HAP-1 (cell line): ENCODE measurements at regions of chr6 and their contacts with region 1.

Region 1: GRCh38 chr6:137717074-137718073 is 149.7 kb upstream of the TNFAIP3 start:
- DNase-seq: no peak
- H3K4me3 ChIP-seq: no peak overlapping the region
- H3K4me1 ChIP-seq: no peaks in the 10 kb centered on the region; the same call in 1 of the 2 replicates
- H3K27me3 ChIP-seq: no peaks in the 10 kb centered on the region

Region 2: GRCh38 chr6:137056121-137056880 is 661.1 kb before region 1 on chr6:
- in situ Hi-C with region 1: no loop called
- DNase-seq: peak; percentile 58 to 95
- H3K4me3 ChIP-seq: no peak overlapping the region
- H3K4me1 ChIP-seq: peaks cover 18% of the 10 kb centered on the region
- H3K27me3 ChIP-seq: no peaks in the 10 kb centered on the region

Region 3: GRCh38 chr6:137475103-137475502 is 242.3 kb before region 1 on chr6:
- in situ Hi-C with region 1: no loop called
- DNase-seq: no peak
- H3K4me3 ChIP-seq: no peak overlapping the region
- H3K4me1 ChIP-seq: peaks cover 20% of the 10 kb centered on the region
- H3K27me3 ChIP-seq: no peaks in the 10 kb centered on the region

Region 4: DNA sequence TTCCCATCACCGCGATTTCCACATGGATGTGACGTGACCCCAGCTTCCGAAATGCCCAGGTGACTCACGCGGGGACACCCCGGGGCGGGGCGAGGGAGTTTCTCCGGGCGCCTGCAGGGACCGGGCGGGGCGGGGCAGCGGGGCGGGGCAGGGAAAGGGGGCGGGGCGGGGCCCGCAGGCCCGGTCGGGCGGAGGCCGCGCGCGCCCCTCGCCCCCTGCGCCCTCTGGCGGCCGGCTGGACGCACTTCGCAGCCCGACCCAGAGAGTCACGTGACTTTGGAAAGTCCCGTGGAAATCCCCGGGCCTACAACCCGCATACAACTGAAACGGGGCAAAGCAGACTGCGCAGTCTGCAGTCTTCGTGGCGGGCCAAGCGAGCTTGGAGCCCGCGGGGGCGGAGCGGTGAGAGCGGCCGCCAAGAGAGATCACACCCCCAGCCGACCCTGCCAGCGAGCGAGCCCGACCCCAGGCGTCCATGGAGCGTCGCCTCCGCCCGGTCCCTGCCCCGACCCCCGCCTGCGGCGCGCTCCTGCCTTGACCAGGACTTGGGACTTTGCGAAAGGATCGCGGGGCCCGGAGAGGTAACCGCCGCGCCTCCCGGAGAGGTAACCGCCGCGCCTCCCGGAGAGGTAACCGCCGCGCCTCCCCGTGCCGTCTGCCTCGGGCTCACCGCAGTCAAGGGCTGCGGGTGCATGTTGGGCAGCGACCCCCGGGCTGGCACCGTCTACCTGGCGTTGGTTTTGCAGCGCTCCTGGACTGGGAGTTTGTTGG is 149.7 kb after region 1 on chr6 and contains the start of gene TNFAIP3:
- in situ Hi-C with region 1: loop called (anchors 10 kb)
- DNase-seq: peak; percentile 79 to 87
- H3K4me3 ChIP-seq: peak within 1 kb of the TSS; percentile 60
- H3K4me1 ChIP-seq: peaks cover 25% of the 10 kb centered on the region
- H3K27me3 ChIP-seq: peaks cover 4% of the 10 kb centered on the region; the same call in 1 of the 2 replicates